ENCODE measurements at regions of chr11 and their contacts with region 1.

Region 1: DNA sequence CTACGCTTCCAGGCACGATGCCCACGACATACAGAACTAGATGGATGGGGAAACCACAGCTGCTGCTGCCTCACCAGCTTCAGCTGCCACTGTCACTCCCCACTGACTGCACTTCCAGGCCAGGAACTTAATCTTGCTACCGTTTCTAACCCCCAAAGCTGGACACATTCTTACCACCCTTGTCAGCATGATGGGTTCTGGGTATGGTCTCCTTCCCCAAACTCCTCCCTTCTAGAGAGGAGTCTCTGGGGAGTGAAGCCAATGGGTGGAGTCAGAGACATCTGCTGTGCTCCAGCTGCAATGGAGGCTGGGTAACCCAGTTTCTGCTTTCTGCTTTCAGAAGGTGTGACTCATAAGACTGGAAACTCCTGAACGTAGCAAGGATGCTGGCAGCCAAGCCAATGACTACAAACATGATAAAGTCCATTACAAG is 87.0 kb upstream of the THY1 start:
- DNase-seq: peak; percentile 76
- ATAC-seq: peak; percentile 86
- H3K4me3 ChIP-seq: no peak overlapping the region
- H3K27ac ChIP-seq: no peak overlapping the region
- H3K4me1 ChIP-seq: peaks cover 20% of the 10 kb centered on the region
- H3K27me3 ChIP-seq: no peaks in the 10 kb centered on the region; a peak in 1 of 4 replicates
- CTCF ChIP-seq: no peak
- EP300 ChIP-seq: no peak; a peak in 1 of 4 replicates
- POLR2A ChIP-seq: no peak
- RAD21 ChIP-seq: no peak

Region 2: GRCh38 chr11:119084663-119085436 is 425.1 kb before region 1 on chr11 and contains the start of gene HMBS:
- CTCF ChIA-PET with region 1: no interaction called
- POLR2A ChIA-PET with region 1: no interaction called
- RAD21 ChIA-PET with region 1: no interaction called
- SMC1A ChIA-PET with region 1: no interaction called
- in situ Hi-C with region 1: no loop called
- intact Hi-C with region 1: no loop called
- DNase-seq: peak; percentile 79
- ATAC-seq: peak; percentile 95
- H3K4me3 ChIP-seq: peak within 1 kb of the TSS; percentile 97
- H3K27ac ChIP-seq: peak within 1 kb of the TSS; percentile 94
- H3K4me1 ChIP-seq: peaks cover 10% of the 10 kb centered on the region
- H3K27me3 ChIP-seq: no peaks in the 10 kb centered on the region
- CTCF ChIP-seq: no peak
- EP300 ChIP-seq: peak in 1 of 2 experiments; percentile 12; a peak in 1 of 4 replicates
- POLR2A ChIP-seq: peak; percentile 89
- RAD21 ChIP-seq: no peak
- polyA plus RNA-seq, gene HMBS: 17.7 to 27.6 TPM

Region 3: DNA sequence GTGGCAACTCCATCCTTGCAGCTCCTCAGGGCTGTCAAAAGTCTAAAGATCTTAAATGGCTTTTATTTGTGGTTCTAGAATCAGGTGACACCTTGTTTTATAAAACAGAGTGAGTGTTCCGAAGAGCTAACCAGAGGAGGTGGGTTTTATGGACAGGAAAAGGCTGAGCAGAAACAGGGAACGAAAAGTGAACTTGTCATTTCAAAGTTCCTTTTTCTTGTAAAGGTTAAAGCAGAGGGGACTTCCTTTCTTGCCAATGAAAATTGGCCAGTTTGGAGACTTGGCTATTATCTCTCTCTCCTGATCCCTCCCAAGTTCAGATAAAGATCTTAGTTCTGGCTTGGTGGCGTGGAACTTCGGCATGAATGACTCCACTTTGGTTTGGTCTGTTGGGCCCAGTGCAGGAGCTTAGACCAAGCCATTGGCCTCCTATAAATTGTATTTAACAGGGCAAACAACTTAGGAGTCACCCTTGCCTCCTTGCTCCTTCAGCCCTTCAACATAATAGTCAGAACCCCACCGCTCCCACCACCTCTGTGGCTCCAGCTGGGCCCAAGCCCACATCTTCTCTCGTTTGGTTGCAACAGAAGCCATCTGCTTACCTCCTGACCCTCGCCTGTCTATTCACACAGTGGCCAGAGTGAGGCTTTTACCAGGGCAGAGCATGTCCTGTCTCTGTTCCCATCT is 15.3 kb after region 1 on chr11:
- CTCF ChIA-PET with region 1: interaction called, 5 read pairs
- POLR2A ChIA-PET with region 1: interaction called, 7 read pairs
- RAD21 ChIA-PET with region 1: interaction called, 5 read pairs
- SMC1A ChIA-PET with region 1: interaction called, 10 read pairs
- in situ Hi-C with region 1: no loop called
- intact Hi-C with region 1: no loop called
- DNase-seq: no peak
- ATAC-seq: peak; percentile 42
- H3K4me3 ChIP-seq: no peak overlapping the region
- H3K27ac ChIP-seq: no peak overlapping the region
- H3K4me1 ChIP-seq: peaks cover 9% of the 10 kb centered on the region
- H3K27me3 ChIP-seq: no peaks in the 10 kb centered on the region; a peak in 2 of 4 replicates
- CTCF ChIP-seq: no peak
- EP300 ChIP-seq: no peak
- POLR2A ChIP-seq: no peak
- RAD21 ChIP-seq: no peak